Caco-2 (cell line): ENCODE measurements at regions of chr15 and their contacts with region 1.

Region 1: DNA sequence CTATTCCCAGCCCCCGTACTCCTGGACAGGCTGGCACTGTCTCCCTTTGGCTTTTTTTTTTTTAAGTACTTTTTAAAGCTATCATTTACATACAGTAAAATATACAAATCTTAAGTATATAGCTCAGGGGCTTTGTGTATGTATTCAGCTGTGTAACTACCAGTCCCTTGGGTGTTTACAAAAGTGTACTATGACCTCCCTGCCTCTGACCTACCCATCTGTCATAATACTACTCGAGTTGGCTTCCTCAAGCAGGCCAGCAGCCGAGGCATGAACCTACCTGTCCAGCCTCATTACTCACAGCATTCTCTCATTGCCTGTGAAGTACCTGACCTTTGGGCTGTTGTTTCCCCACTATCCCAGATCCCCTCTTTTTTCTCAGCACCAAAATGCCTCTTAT is 33.2 kb downstream of the ABHD2 start:
- DNase-seq: peak; percentile 77 to 83
- H3K4me3 ChIP-seq: no peak overlapping the region
- H3K4me3 Mint-ChIP-seq: peak overlapping the region; percentile 20
- H3K27ac Mint-ChIP-seq: peak overlapping the region; percentile 85
- H3K4me1 ChIP-seq: peaks cover 85% of the 10 kb centered on the region
- H3K4me1 Mint-ChIP-seq: peaks cover 59% of the 10 kb centered on the region
- H3K27me3 ChIP-seq: no peaks in the 10 kb centered on the region
- H3K27me3 Mint-ChIP-seq: no peaks in the 10 kb centered on the region
- CTCF ChIP-seq: no peak

Region 2: DNA sequence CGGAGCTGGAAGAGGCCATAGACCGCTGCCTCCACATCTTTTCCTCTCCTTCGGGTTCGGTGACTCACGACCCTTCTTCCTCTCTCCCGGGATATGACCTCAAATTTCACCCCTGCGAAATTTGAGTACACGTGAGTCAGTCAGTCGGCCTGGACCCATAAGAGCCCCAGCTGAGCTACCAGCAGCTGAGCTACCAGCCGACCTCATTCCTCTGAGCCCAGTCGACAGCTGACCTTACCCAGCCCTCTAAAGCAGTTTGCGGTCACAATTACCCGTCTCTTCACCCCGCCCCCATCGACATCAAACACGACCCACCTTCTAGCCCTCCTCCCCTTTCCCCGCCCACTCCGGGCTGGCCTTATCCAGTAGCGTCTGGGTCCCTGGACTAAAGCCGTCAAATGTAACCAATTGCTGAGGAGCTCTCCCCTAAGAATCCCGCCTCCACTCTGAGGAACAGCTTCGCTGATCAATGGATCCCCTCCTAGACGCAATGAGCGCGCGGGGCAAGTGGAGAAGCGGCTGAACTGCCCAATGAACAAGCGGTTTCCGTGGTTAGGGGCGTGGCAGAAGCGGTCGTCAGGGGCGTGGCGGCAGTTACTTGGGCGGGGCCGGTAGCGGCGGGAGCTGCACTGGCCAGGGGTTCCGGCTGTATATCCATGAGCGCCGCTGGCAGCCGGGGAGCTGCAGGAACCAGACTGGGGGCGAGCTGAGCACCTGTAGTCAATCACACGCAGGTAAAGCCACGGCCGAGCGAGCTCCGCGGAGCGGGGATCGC is 33.4 kb before region 1 on chr15 and contains the start of gene ABHD2:
- CTCF ChIA-PET with region 1: interaction called, 3 read pairs
- POLR2A ChIA-PET with region 1: interaction called, 6 read pairs
- intact Hi-C with region 1: loop called (anchors 1 kb)
- DNase-seq: peak; percentile 98 to 99
- H3K4me3 ChIP-seq: peak within 1 kb of the TSS; percentile 61
- H3K4me3 Mint-ChIP-seq: no peak within 1 kb of the TSS
- H3K27ac Mint-ChIP-seq: no peak within 1 kb of the TSS
- H3K4me1 ChIP-seq: peaks cover 14% of the 10 kb centered on the region; the same call in 1 of the 2 replicates
- H3K4me1 Mint-ChIP-seq: peaks cover 8% of the 10 kb centered on the region
- H3K27me3 ChIP-seq: no peaks in the 10 kb centered on the region
- H3K27me3 Mint-ChIP-seq: no peaks in the 10 kb centered on the region
- CTCF ChIP-seq: no peak
- total RNA-seq, gene ABHD2: 56.4 and 63.0 TPM in 2 replicates

Region 3: GRCh38 chr15:89139400-89140166 is 18.2 kb after region 1 on chr15:
- CTCF ChIA-PET with region 1: no interaction called
- POLR2A ChIA-PET with region 1: no interaction called
- intact Hi-C with region 1: loop called (anchors 2 kb)
- DNase-seq: peak in 1 of 2 experiments; percentile 44
- H3K4me3 ChIP-seq: no peak overlapping the region
- H3K4me3 Mint-ChIP-seq: peak overlapping the region; percentile 32
- H3K27ac Mint-ChIP-seq: peak overlapping the region; percentile 84
- H3K4me1 ChIP-seq: peaks cover 14% of the 10 kb centered on the region
- H3K4me1 Mint-ChIP-seq: peaks cover 26% of the 10 kb centered on the region
- H3K27me3 ChIP-seq: no peaks in the 10 kb centered on the region
- H3K27me3 Mint-ChIP-seq: no peaks in the 10 kb centered on the region
- CTCF ChIP-seq: peak; percentile 2 to 32

Region 4: GRCh38 chr15:89164712-89165211 is 43.4 kb after region 1 on chr15:
- CTCF ChIA-PET with region 1: no interaction called
- POLR2A ChIA-PET with region 1: no interaction called
- intact Hi-C with region 1: loop called (anchors 1 kb)
- DNase-seq: peak in 1 of 2 experiments; percentile 30
- H3K4me3 ChIP-seq: no peak overlapping the region
- H3K4me3 Mint-ChIP-seq: peak overlapping the region; percentile 31
- H3K27ac Mint-ChIP-seq: no peak overlapping the region
- H3K4me1 ChIP-seq: peaks cover 32% of the 10 kb centered on the region
- H3K4me1 Mint-ChIP-seq: peaks cover 17% of the 10 kb centered on the region
- H3K27me3 ChIP-seq: no peaks in the 10 kb centered on the region
- H3K27me3 Mint-ChIP-seq: no peaks in the 10 kb centered on the region
- CTCF ChIP-seq: no peak